Naive thymus-derived CD8-positive, alpha-beta T cell (primary cell): ENCODE measurements at regions of chr9 and their contacts with region 1.

Region 1: DNA sequence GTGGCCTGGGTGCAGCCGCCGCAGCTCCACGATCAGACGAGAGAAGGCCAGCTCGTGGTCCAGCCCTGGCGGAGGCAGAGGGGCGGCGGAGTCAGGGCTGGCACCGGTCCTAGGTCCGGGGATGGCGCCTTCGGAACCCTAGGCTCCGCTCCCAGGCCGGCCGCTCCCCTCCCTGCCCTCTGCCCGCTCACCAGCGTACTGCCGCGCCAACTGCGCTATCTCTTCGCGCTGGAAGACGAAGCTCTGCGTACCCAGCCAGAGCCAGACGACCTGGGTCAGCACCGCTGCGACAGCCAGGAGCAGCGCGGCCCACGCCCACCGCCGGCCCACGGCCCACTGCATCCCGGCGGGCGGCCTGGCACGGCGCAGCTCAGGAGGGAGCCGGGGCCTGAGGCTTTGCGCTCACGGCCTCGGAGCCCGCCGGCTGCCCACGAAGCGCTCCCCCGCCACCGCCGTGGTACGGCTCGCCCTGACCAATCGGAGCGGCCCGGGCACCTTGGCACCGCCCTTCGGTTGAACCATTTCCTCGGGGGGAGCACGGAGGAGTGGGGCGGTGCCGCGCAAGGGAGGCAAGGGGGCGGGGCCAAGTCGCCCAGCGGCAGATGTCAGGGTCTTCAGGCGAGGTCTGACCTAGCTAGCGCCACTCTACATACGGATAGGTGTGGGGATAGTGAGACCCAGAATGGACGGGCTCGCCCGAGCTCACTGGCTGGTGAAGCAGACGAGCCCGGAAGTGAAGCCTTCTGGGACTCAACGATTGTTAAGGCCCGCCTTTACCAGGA is at the start of gene SIGMAR1:
- DNase-seq: peak; percentile 85 to 97 (median 93)
- ATAC-seq: peak; percentile 89 to 92
- H3K4me3 Mint-ChIP-seq: peak within 1 kb of the TSS; percentile 82 to 93 (median 90)
- H3K27ac Mint-ChIP-seq: peak within 1 kb of the TSS; percentile 91 to 96 (median 94)
- H3K4me1 Mint-ChIP-seq: peaks cover 18 to 42% (median 34%) of the 10 kb centered on the region in 4 donors
- H3K27me3 Mint-ChIP-seq: no peaks in the 10 kb centered on the region
- polyA plus RNA-seq, gene SIGMAR1: 67.9 to 78.4 (median 71.8) TPM

Region 2: GRCh38 chr9:34611829-34612630 is 25.5 kb before region 1 on chr9 and contains the start of gene RPP25L:
- POLR2A ChIA-PET with region 1: interaction called, 30 read pairs
- DNase-seq: peak; percentile 72 to 92 (median 84)
- ATAC-seq: peak; percentile 86 to 87
- H3K4me3 Mint-ChIP-seq: peak within 1 kb of the TSS; percentile 88 to 95 (median 92)
- H3K27ac Mint-ChIP-seq: peak within 1 kb of the TSS; percentile 77 to 99 (median 95)
- H3K4me1 Mint-ChIP-seq: peaks cover 11 to 31% (median 22%) of the 10 kb centered on the region in 4 donors
- H3K27me3 Mint-ChIP-seq: no peaks in the 10 kb centered on the region
- polyA plus RNA-seq, gene RPP25L: 28.7 to 51.7 (median 45.1) TPM

Region 3: GRCh38 chr9:34620061-34620994 is 17.2 kb before region 1 on chr9 and contains the start of gene DCTN3:
- POLR2A ChIA-PET with region 1: interaction called, 51 read pairs
- DNase-seq: peak; percentile 78 to 97 (median 90)
- ATAC-seq: peak; percentile 97
- H3K4me3 Mint-ChIP-seq: peak within 1 kb of the TSS; percentile 92 to 98 (median 95)
- H3K27ac Mint-ChIP-seq: peak within 1 kb of the TSS; percentile 79 to 97 (median 93)
- H3K4me1 Mint-ChIP-seq: peaks cover 22 to 37% (median 35%) of the 10 kb centered on the region in 4 donors
- H3K27me3 Mint-ChIP-seq: peaks cover 14 to 32% (median 29%) of the 10 kb centered on the region in 5 donors
- polyA plus RNA-seq, gene DCTN3: 117 to 140 (median 124) TPM

Region 4: GRCh38 chr9:34659592-34660535 is 22.3 kb after region 1 on chr9:
- POLR2A ChIA-PET with region 1: interaction called, 23 read pairs
- DNase-seq: no peak
- ATAC-seq: no peak
- H3K4me3 Mint-ChIP-seq: peak overlapping the region in 1 of 10 donors; percentile 29
- H3K27ac Mint-ChIP-seq: peak overlapping the region in 1 of 10 donors; percentile 0
- H3K4me1 Mint-ChIP-seq: peaks cover 29 to 36% (median 32%) of the 10 kb centered on the region in 4 donors
- H3K27me3 Mint-ChIP-seq: no peaks in the 10 kb centered on the region

Region 5: GRCh38 chr9:34665381-34666250 is 28.1 kb after region 1 on chr9:
- POLR2A ChIA-PET with region 1: interaction called, 23 read pairs
- DNase-seq: peak; percentile 77 to 94 (median 86)
- ATAC-seq: peak; percentile 75 to 78
- H3K4me3 Mint-ChIP-seq: peak overlapping the region; percentile 82 to 96 (median 90)
- H3K27ac Mint-ChIP-seq: peak overlapping the region; percentile 74 to 99 (median 98)
- H3K4me1 Mint-ChIP-seq: peaks cover 30 to 59% (median 40%) of the 10 kb centered on the region in 4 donors
- H3K27me3 Mint-ChIP-seq: no peaks in the 10 kb centered on the region

Region 6: DNA sequence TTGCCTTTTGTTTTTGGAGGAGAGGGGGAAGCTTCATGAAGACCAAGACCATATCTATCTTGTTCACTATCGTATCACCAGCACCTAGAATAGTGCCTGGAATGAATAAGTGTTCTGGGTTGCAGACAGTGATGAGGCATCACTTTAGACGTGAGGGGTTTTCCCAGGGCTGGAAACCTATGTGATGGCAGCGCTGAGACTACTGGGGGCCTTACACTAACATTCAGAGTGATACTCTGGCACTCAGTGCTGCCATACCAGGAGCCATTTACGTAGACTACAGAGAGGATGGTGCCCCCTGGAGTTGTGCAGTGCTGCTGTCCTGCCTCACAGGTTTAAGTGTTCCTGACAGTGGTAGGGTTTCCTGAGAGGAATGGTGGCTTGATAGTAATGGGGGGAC is 46.6 kb after region 1 on chr9:
- POLR2A ChIA-PET with region 1: no interaction called
- DNase-seq: no peak
- ATAC-seq: no peak
- H3K4me3 Mint-ChIP-seq: no peak overlapping the region
- H3K27ac Mint-ChIP-seq: no peak overlapping the region
- H3K4me1 Mint-ChIP-seq: no peaks in the 10 kb centered on the region
- H3K27me3 Mint-ChIP-seq: peaks cover 0 to 1% (median 0%) of the 10 kb centered on the region in 5 donors